ENCODE measurements at regions of chr4 and their contacts with region 1.

Region 1: DNA sequence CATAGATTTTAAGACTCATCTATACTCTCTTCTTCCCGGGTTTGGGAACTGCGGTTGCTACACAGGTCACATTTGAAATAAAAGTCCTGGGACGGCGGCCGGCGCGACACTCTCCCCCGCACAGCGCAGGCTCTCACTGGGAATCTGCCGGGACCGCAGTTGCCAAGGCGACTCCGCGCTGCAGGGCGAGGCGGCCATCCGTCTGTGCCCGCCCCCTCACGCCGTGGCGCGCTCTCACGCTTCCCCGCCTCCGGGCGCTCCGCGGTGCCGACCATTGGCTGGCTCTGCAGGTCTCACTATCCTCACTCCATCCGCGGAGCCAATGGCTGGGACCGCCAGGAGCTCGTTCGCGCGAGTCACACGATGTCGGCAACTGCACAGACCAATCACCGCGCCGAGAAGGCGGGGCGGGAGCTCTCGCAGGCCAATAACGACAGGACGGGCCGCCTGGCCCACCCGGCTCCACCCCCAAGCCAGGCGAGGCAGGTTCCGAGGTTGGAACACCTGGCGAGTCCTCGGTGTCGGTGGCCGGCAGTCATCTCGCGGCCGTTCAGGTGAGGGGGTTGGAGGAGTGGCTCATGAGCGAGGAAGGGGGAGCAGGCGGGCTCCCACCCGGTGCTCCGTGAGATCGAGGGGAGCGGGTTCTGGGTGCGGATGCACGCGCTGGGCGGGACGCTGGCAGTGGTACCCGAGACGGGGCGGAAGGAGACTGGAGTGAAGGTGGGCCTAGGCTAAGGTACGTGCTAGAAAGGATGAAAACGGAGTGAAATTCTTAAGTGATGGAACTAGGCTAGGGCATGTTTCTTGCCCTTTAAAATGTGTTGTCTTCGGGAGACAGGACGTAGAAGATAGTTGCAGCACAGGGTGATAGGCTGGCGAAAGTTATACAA is at the start of gene MSMO1:
- DNase-seq: peak; percentile 94 to 99 (median 97)
- ATAC-seq: peak; percentile 98
- H3K4me3 ChIP-seq: peak within 1 kb of the TSS; percentile 82
- H3K4me3 Mint-ChIP-seq: no peak within 1 kb of the TSS
- H3K27ac ChIP-seq: peak within 1 kb of the TSS; percentile 76
- H3K27ac Mint-ChIP-seq: no peak within 1 kb of the TSS
- H3K4me1 ChIP-seq: peaks cover 18 to 31% of the 10 kb centered on the region in 2 donors
- H3K4me1 Mint-ChIP-seq: peaks cover 23 to 43% (median 31%) of the 10 kb centered on the region in 7 donors
- H3K27me3 ChIP-seq: no peaks in the 10 kb centered on the region
- H3K27me3 Mint-ChIP-seq: no peaks in the 10 kb centered on the region
- total RNA-seq, gene MSMO1: 9.6 to 37.9 (median 24.6) TPM

Region 2: GRCh38 chr4:163494360-163495162 is 1832.9 kb before region 1 on chr4 and contains the start of gene TMA16:
- CTCF ChIA-PET with region 1: no interaction called
- POLR2A ChIA-PET with region 1: no interaction called
- intact Hi-C with region 1: loop called in 1 of 2 experiments (anchors 5 kb)
- DNase-seq: peak; percentile 56 to 87 (median 76)
- ATAC-seq: peak; percentile 89
- H3K4me3 ChIP-seq: peak within 1 kb of the TSS; percentile 94
- H3K4me3 Mint-ChIP-seq: peak within 1 kb of the TSS; percentile 92 to 100 (median 98)
- H3K27ac ChIP-seq: peak within 1 kb of the TSS; percentile 83
- H3K27ac Mint-ChIP-seq: peak within 1 kb of the TSS; percentile 78 to 99 (median 96)
- H3K4me1 ChIP-seq: peaks cover 7% of the 10 kb centered on the region in 2 donors
- H3K4me1 Mint-ChIP-seq: peaks cover 20 to 44% (median 36%) of the 10 kb centered on the region in 7 donors
- H3K27me3 ChIP-seq: no peaks in the 10 kb centered on the region
- H3K27me3 Mint-ChIP-seq: peaks cover 0 to 12% (median 5%) of the 10 kb centered on the region in 5 donors
- total RNA-seq, gene TMA16: 10.5 to 38.7 (median 20.7) TPM

Region 3: DNA sequence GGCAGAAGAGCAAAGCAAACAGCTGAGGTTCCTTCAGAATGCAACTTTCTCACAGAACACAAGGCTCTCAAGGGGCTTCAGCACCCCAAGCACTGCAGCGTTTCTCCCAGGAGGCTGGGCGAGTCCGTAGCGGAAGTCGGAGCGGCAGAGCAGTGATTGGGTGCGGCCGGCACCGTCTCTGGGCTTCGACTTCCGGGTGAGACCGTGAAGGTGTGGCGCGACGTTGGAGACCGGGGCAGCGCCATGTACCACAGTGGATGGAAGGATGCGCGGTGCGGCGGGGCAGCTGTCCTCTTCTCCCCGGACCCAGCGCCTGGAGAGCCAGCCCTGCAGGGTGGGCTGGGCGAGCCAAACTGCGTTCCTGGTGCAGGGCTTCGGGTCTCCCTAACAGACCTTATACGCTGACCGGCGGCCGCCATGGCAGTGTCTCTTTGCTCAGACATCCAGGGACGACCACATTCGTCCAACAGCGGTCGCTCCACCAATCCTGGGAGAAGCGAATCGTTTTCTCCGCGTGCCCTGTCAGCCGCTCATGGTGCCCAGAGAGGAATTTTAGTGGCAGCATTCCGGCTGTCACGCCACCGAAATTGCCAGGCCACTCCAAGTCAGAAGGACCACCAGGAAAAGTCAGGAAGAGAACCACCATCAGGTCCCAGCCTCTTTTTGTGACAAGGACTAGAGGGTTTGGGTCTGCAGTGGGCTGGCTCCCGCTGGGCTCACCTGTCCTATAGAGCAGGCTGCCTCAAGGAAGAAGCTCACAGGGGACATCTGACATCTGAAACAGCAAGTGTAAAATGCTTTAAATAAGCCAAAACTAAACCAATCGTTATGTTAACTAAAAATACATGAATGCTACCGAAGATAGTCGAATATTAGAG is 370.5 kb before region 1 on chr4:
- CTCF ChIA-PET with region 1: no interaction called
- POLR2A ChIA-PET with region 1: no interaction called
- intact Hi-C with region 1: loop called (anchors 2 to 10 kb)
- DNase-seq: peak; percentile 41 to 78 (median 59)
- ATAC-seq: peak; percentile 96
- H3K4me3 ChIP-seq: peak overlapping the region; percentile 69
- H3K4me3 Mint-ChIP-seq: peak overlapping the region; percentile 79 to 94 (median 91)
- H3K27ac ChIP-seq: no peak overlapping the region
- H3K27ac Mint-ChIP-seq: peak overlapping the region; percentile 70 to 88 (median 81)
- H3K4me1 ChIP-seq: no peaks in the 10 kb centered on the region
- H3K4me1 Mint-ChIP-seq: peaks cover 11 to 28% (median 21%) of the 10 kb centered on the region in 7 donors
- H3K27me3 ChIP-seq: no peaks in the 10 kb centered on the region
- H3K27me3 Mint-ChIP-seq: peaks cover 7 to 21% (median 12%) of the 10 kb centered on the region in 5 donors

Region 4: GRCh38 chr4:165131247-165131832 is 196.1 kb before region 1 on chr4:
- CTCF ChIA-PET with region 1: interaction called, 4 read pairs
- POLR2A ChIA-PET with region 1: interaction called, 3 read pairs
- intact Hi-C with region 1: loop called (anchors 1 kb)
- DNase-seq: peak; percentile 47 to 85 (median 68)
- ATAC-seq: peak; percentile 89
- H3K4me3 ChIP-seq: no peak overlapping the region
- H3K4me3 Mint-ChIP-seq: peak overlapping the region in 1 of 10 donors; percentile 14
- H3K27ac ChIP-seq: no peak overlapping the region
- H3K27ac Mint-ChIP-seq: peak overlapping the region in 1 of 9 donors; percentile 13
- H3K4me1 ChIP-seq: no peaks in the 10 kb centered on the region
- H3K4me1 Mint-ChIP-seq: peaks cover 4 to 12% (median 10%) of the 10 kb centered on the region in 7 donors
- H3K27me3 ChIP-seq: no peaks in the 10 kb centered on the region
- H3K27me3 Mint-ChIP-seq: peaks cover 0 to 17% (median 5%) of the 10 kb centered on the region in 5 donors

Region 5: GRCh38 chr4:165207431-165208220 is 119.8 kb before region 1 on chr4 and contains the start of gene KLHL2:
- CTCF ChIA-PET with region 1: no interaction called
- POLR2A ChIA-PET with region 1: interaction called, 6 read pairs
- intact Hi-C with region 1: loop called (anchors 1 kb)
- DNase-seq: peak; percentile 52 to 78 (median 66)
- ATAC-seq: peak; percentile 88
- H3K4me3 ChIP-seq: peak within 1 kb of the TSS; percentile 89
- H3K4me3 Mint-ChIP-seq: peak within 1 kb of the TSS; percentile 86 to 98 (median 96)
- H3K27ac ChIP-seq: peak within 1 kb of the TSS; percentile 65
- H3K27ac Mint-ChIP-seq: peak within 1 kb of the TSS; percentile 90 to 95 (median 92)
- H3K4me1 ChIP-seq: peaks cover 0 to 33% of the 10 kb centered on the region in 2 donors
- H3K4me1 Mint-ChIP-seq: peaks cover 46 to 75% (median 73%) of the 10 kb centered on the region in 7 donors
- H3K27me3 ChIP-seq: no peaks in the 10 kb centered on the region
- H3K27me3 Mint-ChIP-seq: no peaks in the 10 kb centered on the region
- total RNA-seq, gene KLHL2: 26.9 to 39.9 (median 27.9) TPM

Region 6: DNA sequence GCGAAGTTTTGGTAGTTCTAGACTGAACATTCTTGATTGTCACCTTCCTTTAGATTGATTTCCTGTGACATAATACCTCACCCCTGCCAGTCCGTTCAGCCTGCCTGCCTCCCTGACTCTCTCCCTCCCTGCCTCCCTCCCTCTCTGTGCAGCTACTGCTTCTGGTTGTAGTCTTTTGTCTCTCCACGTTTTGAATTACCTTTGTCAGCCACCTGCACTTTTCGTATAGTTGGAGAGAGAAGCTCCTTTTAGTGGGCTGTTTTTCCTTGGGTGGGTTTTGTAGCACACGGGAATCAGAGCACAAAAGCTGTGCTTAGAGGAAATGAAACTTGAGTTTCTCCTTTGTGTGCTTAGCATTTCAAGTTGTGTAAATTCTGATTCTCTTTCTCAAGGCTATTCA is 32.5 kb before region 1 on chr4:
- CTCF ChIA-PET with region 1: no interaction called
- POLR2A ChIA-PET with region 1: interaction called, 4 read pairs
- intact Hi-C with region 1: loop called in 1 of 2 experiments (anchors 1 kb)
- DNase-seq: peak in 7 of 9 donors; percentile 16 to 56 (median 51)
- ATAC-seq: peak; percentile 87
- H3K4me3 ChIP-seq: no peak overlapping the region
- H3K4me3 Mint-ChIP-seq: peak overlapping the region; percentile 45 to 80 (median 74)
- H3K27ac ChIP-seq: peak overlapping the region; percentile 49
- H3K27ac Mint-ChIP-seq: peak overlapping the region; percentile 16 to 91 (median 74)
- H3K4me1 ChIP-seq: peaks cover 0 to 15% of the 10 kb centered on the region in 2 donors
- H3K4me1 Mint-ChIP-seq: peaks cover 22 to 42% (median 28%) of the 10 kb centered on the region in 7 donors
- H3K27me3 ChIP-seq: no peaks in the 10 kb centered on the region
- H3K27me3 Mint-ChIP-seq: no peaks in the 10 kb centered on the region

Region 7: GRCh38 chr4:165301833-165302232 is 25.6 kb before region 1 on chr4:
- CTCF ChIA-PET with region 1: no interaction called
- POLR2A ChIA-PET with region 1: interaction called, 3 read pairs
- intact Hi-C with region 1: loop called in 1 of 2 experiments (anchors 1 kb)
- DNase-seq: peak in 6 of 9 donors; percentile 20 to 41 (median 30)
- ATAC-seq: peak; percentile 70
- H3K4me3 ChIP-seq: peak overlapping the region; percentile 28
- H3K4me3 Mint-ChIP-seq: peak overlapping the region; percentile 53 to 91 (median 80)
- H3K27ac ChIP-seq: peak overlapping the region; percentile 66
- H3K27ac Mint-ChIP-seq: peak overlapping the region; percentile 81 to 93 (median 87)
- H3K4me1 ChIP-seq: peaks cover 0 to 8% of the 10 kb centered on the region in 2 donors
- H3K4me1 Mint-ChIP-seq: peaks cover 17 to 39% (median 30%) of the 10 kb centered on the region in 7 donors
- H3K27me3 ChIP-seq: no peaks in the 10 kb centered on the region
- H3K27me3 Mint-ChIP-seq: no peaks in the 10 kb centered on the region

Measured in naive thymus-derived CD4-positive, alpha-beta T cell (primary cell).